ENCODE measurements at regions of chr17 and their contacts with region 1.

Region 1: DNA sequence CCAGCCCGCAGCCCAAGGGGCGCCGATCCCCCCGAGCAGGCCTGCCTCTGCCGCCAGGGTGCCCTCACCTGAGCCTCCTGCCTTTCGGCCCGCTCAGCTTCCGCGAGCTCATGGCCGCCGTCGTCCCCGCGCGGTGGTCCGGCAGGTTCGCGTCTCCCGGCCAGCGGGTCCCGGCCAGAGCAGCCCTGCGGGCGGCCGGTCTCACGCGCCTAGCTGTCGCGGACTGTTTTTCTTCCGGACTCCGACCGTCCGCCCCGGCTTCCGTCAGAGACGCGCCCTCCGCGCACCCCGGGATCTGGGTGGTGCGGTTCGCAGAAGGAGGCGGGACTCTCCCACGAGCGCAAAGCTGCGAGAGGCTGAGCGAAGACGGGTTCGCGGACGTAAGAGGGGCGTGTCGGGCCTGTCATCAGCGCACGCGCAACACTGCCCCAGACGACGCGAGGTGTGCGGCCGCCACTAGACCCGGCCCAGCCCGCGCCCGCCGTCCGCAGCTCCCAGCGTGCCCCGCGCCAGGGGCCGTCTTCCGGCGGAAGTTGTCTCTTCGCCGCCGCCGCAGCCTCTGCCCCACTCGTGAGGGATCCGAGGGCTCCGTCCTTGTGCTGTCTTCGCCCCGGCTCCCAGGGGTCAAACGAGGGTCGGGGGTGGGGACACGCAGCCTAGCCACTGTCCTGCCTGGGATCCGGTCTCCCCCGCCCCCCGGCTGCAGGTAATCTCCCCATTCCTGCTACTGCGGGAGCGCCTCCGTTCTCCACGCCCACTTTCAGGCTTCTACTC is at the start of gene INPP5K:
- DNase-seq: peak; percentile 99
- ATAC-seq: peak; percentile 90
- H3K4me3 ChIP-seq: peak within 1 kb of the TSS; percentile 88 to 96 (median 94)
- H3K4me3 Mint-ChIP-seq: peak within 1 kb of the TSS; percentile 88
- H3K27ac ChIP-seq: peak within 1 kb of the TSS; percentile 67 to 90
- H3K27ac Mint-ChIP-seq: peak within 1 kb of the TSS; percentile 92
- H3K4me1 ChIP-seq: peaks cover 10 to 28% of the 10 kb centered on the region in 2 donors
- H3K4me1 Mint-ChIP-seq: peaks cover 21% of the 10 kb centered on the region
- H3K27me3 ChIP-seq: no peaks in the 10 kb centered on the region
- H3K27me3 Mint-ChIP-seq: no peaks in the 10 kb centered on the region
- CTCF ChIP-seq: no peak
- total RNA-seq, gene INPP5K: 76.7 and 77.9 TPM in 2 replicates

Region 2: GRCh38 chr17:1260086-1260769 is 256.3 kb before region 1 on chr17:
- CTCF ChIA-PET with region 1: interaction called, 10 read pairs
- POLR2A ChIA-PET with region 1: no interaction called
- intact Hi-C with region 1: loop called (anchors 5 kb)
- DNase-seq: no peak
- ATAC-seq: no peak
- H3K4me3 ChIP-seq: peak overlapping the region in 4 of 5 experiments; percentile 32 to 67 (median 47)
- H3K4me3 Mint-ChIP-seq: peak overlapping the region; percentile 63
- H3K27ac ChIP-seq: no peak overlapping the region
- H3K27ac Mint-ChIP-seq: no peak overlapping the region
- H3K4me1 ChIP-seq: peaks cover 3 to 13% of the 10 kb centered on the region in 2 donors
- H3K4me1 Mint-ChIP-seq: peaks cover 12% of the 10 kb centered on the region
- H3K27me3 ChIP-seq: peaks cover 0 to 45% (median 16%) of the 10 kb centered on the region in 4 experiments
- H3K27me3 Mint-ChIP-seq: peaks cover 26% of the 10 kb centered on the region
- CTCF ChIP-seq: no peak

Region 3: GRCh38 chr17:1351971-1352370 is 164.6 kb before region 1 on chr17:
- CTCF ChIA-PET with region 1: interaction called, 11 read pairs
- POLR2A ChIA-PET with region 1: no interaction called
- intact Hi-C with region 1: no loop called
- DNase-seq: no peak
- ATAC-seq: no peak
- H3K4me3 ChIP-seq: no peak overlapping the region
- H3K4me3 Mint-ChIP-seq: no peak overlapping the region
- H3K27ac ChIP-seq: no peak overlapping the region
- H3K27ac Mint-ChIP-seq: no peak overlapping the region
- H3K4me1 ChIP-seq: peaks cover 0 to 7% of the 10 kb centered on the region in 2 donors
- H3K4me1 Mint-ChIP-seq: peaks cover 7% of the 10 kb centered on the region
- H3K27me3 ChIP-seq: no peaks in the 10 kb centered on the region
- H3K27me3 Mint-ChIP-seq: no peaks in the 10 kb centered on the region
- CTCF ChIP-seq: no peak

Region 4: GRCh38 chr17:1438593-1439083 is 77.9 kb before region 1 on chr17:
- CTCF ChIA-PET with region 1: interaction called, 18 read pairs
- POLR2A ChIA-PET with region 1: no interaction called
- intact Hi-C with region 1: no loop called
- DNase-seq: no peak
- ATAC-seq: no peak
- H3K4me3 ChIP-seq: no peak overlapping the region
- H3K4me3 Mint-ChIP-seq: no peak overlapping the region
- H3K27ac ChIP-seq: no peak overlapping the region
- H3K27ac Mint-ChIP-seq: no peak overlapping the region
- H3K4me1 ChIP-seq: no peaks in the 10 kb centered on the region
- H3K4me1 Mint-ChIP-seq: peaks cover 9% of the 10 kb centered on the region
- H3K27me3 ChIP-seq: no peaks in the 10 kb centered on the region
- H3K27me3 Mint-ChIP-seq: no peaks in the 10 kb centered on the region
- CTCF ChIP-seq: no peak

Region 5: DNA sequence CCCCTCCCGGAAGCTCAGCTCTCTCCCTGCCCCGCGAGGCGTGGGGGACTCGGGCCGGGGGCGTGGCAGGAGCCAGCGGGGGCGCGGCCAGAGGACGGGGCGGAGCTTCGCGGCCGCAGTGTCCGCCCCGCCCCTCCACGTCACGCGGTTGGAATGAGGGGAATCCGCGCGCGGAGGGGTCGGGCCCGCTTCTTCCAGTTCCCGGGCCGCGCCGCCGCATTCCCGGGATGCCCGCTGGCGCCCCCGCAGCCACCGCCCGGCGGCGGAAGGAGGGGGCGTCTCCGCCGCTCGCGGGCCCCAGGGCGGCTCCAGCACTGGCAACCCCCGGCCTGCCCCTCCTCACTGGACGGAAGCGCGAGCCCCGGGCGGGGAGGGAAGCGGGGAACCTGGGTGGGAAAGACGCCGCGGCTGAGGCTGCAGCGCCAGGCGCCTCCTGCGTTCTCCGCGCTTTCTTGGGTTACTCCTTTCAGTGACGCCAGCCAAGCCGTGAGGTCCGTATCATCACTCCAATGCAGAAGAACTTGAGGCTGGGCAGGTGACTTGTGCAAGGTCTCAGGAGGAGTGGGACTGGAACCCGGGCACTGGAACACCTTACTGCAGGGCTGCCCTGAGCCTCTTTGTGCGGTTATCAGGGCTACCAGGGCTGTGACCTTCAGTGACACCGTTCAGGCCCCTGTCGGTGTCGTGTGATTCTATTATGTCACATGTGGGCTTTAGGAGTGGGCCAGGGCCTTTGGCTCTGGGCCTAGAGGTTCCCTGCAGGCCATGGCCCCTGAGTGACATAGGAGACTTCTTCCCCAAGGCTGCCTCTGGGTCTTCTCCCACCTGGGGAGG is 28.3 kb before region 1 on chr17:
- CTCF ChIA-PET with region 1: interaction called, 23 read pairs
- POLR2A ChIA-PET with region 1: interaction called, 23 read pairs
- intact Hi-C with region 1: loop called (anchors 1 kb)
- DNase-seq: peak; percentile 88
- ATAC-seq: peak; percentile 32
- H3K4me3 ChIP-seq: peak overlapping the region; percentile 31 to 83 (median 68)
- H3K4me3 Mint-ChIP-seq: peak overlapping the region; percentile 87
- H3K27ac ChIP-seq: peak overlapping the region; percentile 81 to 90
- H3K27ac Mint-ChIP-seq: peak overlapping the region; percentile 91
- H3K4me1 ChIP-seq: peaks cover 36 to 65% of the 10 kb centered on the region in 2 donors
- H3K4me1 Mint-ChIP-seq: peaks cover 54% of the 10 kb centered on the region
- H3K27me3 ChIP-seq: peaks cover 0 to 5% (median 0%) of the 10 kb centered on the region in 4 experiments
- H3K27me3 Mint-ChIP-seq: no peaks in the 10 kb centered on the region
- CTCF ChIP-seq: no peak

Region 6: DNA sequence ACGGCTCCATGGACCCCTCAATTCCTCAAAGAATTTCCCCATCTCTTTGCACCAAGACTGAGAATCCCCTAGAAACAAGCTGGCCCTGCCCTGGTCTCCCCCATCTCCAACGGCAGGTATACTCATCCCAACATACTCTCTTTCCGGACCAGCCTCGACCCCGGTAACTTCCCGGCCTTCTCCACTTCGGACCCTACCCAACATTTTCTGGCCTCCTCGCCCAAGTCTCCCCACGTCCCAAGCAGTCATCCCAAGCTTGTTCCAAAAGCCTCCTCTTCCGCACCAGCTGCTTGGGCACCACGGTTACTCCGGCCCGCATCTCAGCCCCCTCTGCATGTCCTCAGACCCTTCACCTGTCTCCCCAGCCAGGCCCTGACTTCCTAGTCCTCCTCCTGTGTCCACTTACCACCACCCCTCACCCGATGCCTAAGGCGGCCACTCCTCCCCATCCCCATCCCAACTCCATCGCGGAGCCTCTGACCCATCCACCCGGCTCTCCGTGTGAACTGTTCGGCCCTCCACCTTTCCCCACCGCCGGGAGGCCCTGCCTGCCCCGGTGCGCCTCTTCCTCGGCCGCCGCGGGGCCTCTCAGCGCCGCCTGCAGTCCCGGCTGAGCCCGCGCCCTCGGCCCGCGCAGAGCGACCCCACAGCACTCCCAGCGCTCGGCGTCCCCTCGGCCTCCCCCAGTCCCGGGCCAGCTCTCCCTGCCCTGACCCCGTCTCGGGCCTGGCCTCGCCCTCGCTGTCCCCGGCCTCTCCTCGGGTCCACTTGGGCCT is 45.0 kb after region 1 on chr17:
- CTCF ChIA-PET with region 1: interaction called, 4 read pairs
- POLR2A ChIA-PET with region 1: interaction called, 4 read pairs
- intact Hi-C with region 1: loop called (anchors 5 kb)
- DNase-seq: peak; percentile 67
- ATAC-seq: peak; percentile 37
- H3K4me3 ChIP-seq: peak overlapping the region; percentile 8 to 72 (median 64)
- H3K4me3 Mint-ChIP-seq: peak overlapping the region; percentile 89
- H3K27ac ChIP-seq: peak overlapping the region in 1 of 2 donors; percentile 78
- H3K27ac Mint-ChIP-seq: peak overlapping the region; percentile 78
- H3K4me1 ChIP-seq: peaks cover 20 to 29% of the 10 kb centered on the region in 2 donors
- H3K4me1 Mint-ChIP-seq: peaks cover 39% of the 10 kb centered on the region
- H3K27me3 ChIP-seq: no peaks in the 10 kb centered on the region
- H3K27me3 Mint-ChIP-seq: no peaks in the 10 kb centered on the region
- CTCF ChIP-seq: peak; percentile 36

Region 7: DNA sequence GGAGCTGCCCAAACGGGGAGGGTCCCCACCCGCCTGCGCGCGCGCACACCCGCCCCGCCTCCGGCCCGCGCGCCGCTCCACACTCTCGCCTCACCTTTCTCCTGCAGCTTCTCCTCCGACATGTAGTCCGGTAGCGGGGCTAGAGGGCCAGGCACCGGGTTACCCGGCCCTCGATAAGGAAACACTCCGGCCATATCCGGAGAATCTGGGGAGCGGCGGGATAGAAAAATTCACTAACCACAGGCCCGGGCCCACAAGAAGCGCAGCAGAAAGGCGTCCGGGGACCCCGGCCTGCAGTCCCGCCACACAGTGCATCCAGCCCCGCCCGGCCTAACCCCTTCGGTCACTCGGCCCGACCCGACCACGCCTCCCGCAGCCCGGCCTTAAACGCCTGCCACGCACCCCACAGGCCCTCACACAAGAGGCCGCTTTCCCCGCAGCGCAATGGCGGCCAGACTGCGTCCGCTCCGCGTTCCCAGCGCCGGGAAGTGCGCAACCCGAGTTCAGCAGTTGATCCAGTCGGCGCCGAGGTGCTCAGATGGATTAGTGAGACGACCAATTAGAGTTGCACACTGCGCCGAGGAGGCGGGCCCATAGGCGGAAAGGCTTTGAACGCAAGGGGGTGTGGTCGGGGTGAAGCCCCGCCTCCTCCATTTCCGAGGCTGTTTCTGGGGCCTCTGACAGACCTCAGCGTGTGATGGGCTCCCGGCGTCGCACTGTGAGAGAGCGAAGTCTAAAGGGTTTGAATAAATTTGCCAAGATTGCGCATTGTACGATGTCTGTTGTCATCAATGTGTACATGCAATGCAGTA is 168.0 kb after region 1 on chr17 and contains the start of gene PRPF8:
- CTCF ChIA-PET with region 1: interaction called, 5 read pairs
- POLR2A ChIA-PET with region 1: no interaction called
- intact Hi-C with region 1: loop called (anchors 1 kb)
- DNase-seq: peak; percentile 99
- ATAC-seq: peak; percentile 99
- H3K4me3 ChIP-seq: peak within 1 kb of the TSS; percentile 88 to 97 (median 92)
- H3K4me3 Mint-ChIP-seq: peak within 1 kb of the TSS; percentile 100
- H3K27ac ChIP-seq: peak within 1 kb of the TSS; percentile 90 to 92
- H3K27ac Mint-ChIP-seq: peak within 1 kb of the TSS; percentile 100
- H3K4me1 ChIP-seq: peaks cover 17 to 28% of the 10 kb centered on the region in 2 donors
- H3K4me1 Mint-ChIP-seq: peaks cover 37% of the 10 kb centered on the region
- H3K27me3 ChIP-seq: no peaks in the 10 kb centered on the region
- H3K27me3 Mint-ChIP-seq: no peaks in the 10 kb centered on the region
- CTCF ChIP-seq: no peak
- total RNA-seq, gene PRPF8: 418 and 423 TPM in 2 replicates